Astrocyte of the cerebellum (primary cell): ENCODE measurements at regions of chr11 and their contacts with region 1.

Region 1: DNA sequence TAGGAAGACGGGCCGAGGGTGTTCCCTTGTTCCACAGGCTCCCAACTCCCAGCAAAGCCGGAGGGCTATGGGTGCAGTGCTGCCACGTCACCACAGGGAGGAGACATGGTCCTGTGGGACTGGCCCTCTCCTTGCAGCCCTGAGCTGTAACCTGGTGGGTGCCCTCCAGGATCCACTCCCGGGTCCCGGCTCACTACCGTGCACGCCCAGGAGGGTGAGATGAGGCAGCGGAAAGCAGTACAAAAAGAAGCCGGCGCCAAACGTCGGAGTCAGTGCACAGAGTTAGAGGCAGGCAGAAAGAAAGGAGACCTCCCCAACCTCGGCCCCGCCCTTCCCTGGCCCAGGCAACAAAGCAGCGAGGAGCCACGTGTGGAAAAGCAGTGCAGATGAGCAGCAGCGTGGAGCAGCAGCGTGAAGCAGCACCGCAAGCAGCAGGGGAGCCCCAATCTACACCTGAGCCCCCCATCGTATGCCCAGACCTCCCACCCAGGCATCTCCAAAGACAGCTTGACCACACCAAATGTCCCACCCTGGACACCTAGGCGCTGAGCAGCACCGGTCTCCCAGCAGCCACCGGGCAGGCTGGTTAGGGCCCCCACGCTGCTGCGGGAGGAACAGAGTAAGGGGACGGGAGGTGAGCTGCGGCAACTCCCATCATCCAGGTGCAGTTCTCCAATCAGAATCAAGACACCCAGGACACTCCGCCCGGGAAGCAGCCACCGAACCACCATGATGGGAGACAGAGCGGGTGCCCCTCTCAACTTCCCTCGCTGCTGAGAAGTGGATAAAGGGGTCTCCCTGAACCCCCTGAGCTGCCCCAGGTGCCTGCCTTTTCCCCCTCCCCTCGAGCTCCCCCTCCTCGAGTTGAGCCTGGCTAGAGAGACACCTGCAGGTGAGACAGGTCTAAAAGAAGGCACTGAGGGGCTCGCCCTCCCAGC is 28.8 kb downstream of the IGSF9B start:
- DNase-seq: peak; percentile 15
- H3K4me3 ChIP-seq: no peak overlapping the region
- CTCF ChIP-seq: peak; percentile 93

Region 2: GRCh38 chr11:133981156-133981555 is 53.2 kb after region 1 on chr11:
- in situ Hi-C with region 1: loop called (anchors 5 kb)
- DNase-seq: no peak
- H3K4me3 ChIP-seq: no peak overlapping the region
- CTCF ChIP-seq: no peak